CD8-positive, alpha-beta T cell (primary cell): ENCODE measurements at regions of chr5 and their contacts with region 1.

Region 1: DNA sequence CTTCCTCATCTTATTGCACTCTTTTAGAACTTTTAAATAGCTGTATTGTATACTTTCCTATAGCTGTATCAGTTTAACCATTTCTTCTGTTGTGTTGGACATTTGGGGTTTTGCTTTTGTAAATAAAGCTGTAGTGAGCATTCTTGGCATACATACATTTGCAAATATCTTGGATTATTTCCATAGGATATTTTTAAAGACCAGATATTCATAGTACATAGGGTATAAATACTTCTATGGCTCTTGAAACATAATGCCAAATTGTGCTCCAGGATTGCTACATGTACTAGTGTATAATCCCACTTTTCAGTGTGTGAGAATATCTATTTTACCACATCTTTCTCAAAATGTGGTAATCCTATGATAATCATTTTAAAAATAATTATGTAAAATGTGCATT is 51.2 kb downstream of the SCAMP1 start:
- DNase-seq: no peak
- ATAC-seq: no peak
- H3K4me3 ChIP-seq: no peak overlapping the region
- H3K4me3 Mint-ChIP-seq: no peak overlapping the region
- H3K27ac ChIP-seq: no peak overlapping the region
- H3K27ac Mint-ChIP-seq: no peak overlapping the region
- H3K4me1 ChIP-seq: no peaks in the 10 kb centered on the region
- H3K4me1 Mint-ChIP-seq: peaks cover 43% of the 10 kb centered on the region
- H3K27me3 ChIP-seq: no peaks in the 10 kb centered on the region
- H3K27me3 Mint-ChIP-seq: no peaks in the 10 kb centered on the region
- CTCF ChIP-seq: no peak

Region 2: DNA sequence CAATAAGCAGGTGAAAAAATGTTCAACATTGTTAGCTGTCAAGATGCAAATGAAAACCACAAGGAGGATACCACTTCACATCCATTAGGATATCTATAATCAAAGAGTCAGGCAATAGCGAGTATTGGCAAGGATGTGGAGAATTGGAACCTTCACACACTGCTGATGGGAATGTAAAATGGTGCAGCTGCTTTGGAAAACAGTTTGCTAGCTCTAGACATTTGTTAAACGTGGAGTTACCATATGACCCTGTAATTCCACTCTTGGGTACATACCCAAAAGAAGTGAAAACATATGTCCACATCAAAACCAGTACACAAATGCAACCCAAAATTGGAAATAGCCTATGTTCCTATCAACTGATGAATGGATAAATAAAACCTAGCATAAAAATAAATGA is 13.8 kb before region 1 on chr5:
- CTCF ChIA-PET with region 1: no interaction called
- POLR2A ChIA-PET with region 1: no interaction called
- intact Hi-C with region 1: loop called in 1 of 2 experiments (anchors 2 kb)
- DNase-seq: no peak
- ATAC-seq: no peak
- H3K4me3 ChIP-seq: no peak overlapping the region
- H3K4me3 Mint-ChIP-seq: no peak overlapping the region
- H3K27ac ChIP-seq: no peak overlapping the region
- H3K27ac Mint-ChIP-seq: no peak overlapping the region
- H3K4me1 ChIP-seq: no peaks in the 10 kb centered on the region
- H3K4me1 Mint-ChIP-seq: peaks cover 48% of the 10 kb centered on the region
- H3K27me3 ChIP-seq: no peaks in the 10 kb centered on the region
- H3K27me3 Mint-ChIP-seq: no peaks in the 10 kb centered on the region
- CTCF ChIP-seq: no peak

Region 3: DNA sequence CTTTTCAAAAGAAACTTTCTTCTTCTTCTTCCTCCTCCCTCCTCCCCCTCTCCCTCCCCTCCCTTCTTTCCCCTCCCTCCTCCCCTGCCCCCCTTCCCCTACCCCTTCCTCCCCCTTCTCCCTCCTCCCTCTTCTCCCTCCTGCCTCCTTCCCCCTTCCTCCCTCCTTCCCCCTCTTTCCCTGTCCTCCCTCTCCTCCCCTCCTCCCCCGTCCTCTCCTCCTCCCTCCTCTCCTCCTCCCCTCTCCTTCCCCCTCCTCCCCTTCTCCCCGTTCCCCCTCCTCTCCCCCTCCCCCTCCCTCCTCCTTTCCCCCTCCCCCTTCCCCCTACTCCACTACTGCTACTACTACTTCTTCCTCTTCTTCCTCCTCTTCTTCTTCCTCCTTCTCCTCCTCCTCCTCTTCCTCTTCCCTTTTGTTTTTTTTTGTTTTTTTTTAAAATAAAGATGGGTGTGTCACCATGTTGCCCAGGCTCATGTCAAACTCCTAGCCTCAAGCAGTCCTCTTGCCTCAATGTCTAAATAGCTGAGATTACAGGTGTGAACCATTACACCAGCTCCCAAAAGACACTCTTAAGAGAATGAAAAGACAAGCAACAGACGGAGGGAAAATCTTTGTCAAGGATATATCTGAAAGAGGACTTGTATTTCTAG is 36.3 kb after region 1 on chr5:
- CTCF ChIA-PET with region 1: no interaction called
- POLR2A ChIA-PET with region 1: no interaction called
- intact Hi-C with region 1: no loop called
- DNase-seq: no peak
- ATAC-seq: no peak
- H3K4me3 ChIP-seq: no peak overlapping the region
- H3K4me3 Mint-ChIP-seq: no peak overlapping the region
- H3K27ac ChIP-seq: no peak overlapping the region
- H3K27ac Mint-ChIP-seq: no peak overlapping the region
- H3K4me1 ChIP-seq: no peaks in the 10 kb centered on the region
- H3K4me1 Mint-ChIP-seq: no peaks in the 10 kb centered on the region
- H3K27me3 ChIP-seq: no peaks in the 10 kb centered on the region
- H3K27me3 Mint-ChIP-seq: no peaks in the 10 kb centered on the region
- CTCF ChIP-seq: no peak